ENCODE measurements at regions of chr1 and their contacts with region 1.

Region 1: GRCh38 chr1:162136760-162137159 is 67.3 kb downstream of the NOS1AP start:
- DNase-seq: peak in 1 of 2 experiments; percentile 39
- H3K4me3 ChIP-seq: no peak overlapping the region
- H3K4me3 Mint-ChIP-seq: peak overlapping the region; percentile 53
- H3K27ac Mint-ChIP-seq: peak overlapping the region; percentile 74
- H3K4me1 ChIP-seq: peaks cover 50% of the 10 kb centered on the region
- H3K4me1 Mint-ChIP-seq: peaks cover 46% of the 10 kb centered on the region
- H3K27me3 ChIP-seq: no peaks in the 10 kb centered on the region
- H3K27me3 Mint-ChIP-seq: no peaks in the 10 kb centered on the region
- CTCF ChIP-seq: no peak

Region 2: DNA sequence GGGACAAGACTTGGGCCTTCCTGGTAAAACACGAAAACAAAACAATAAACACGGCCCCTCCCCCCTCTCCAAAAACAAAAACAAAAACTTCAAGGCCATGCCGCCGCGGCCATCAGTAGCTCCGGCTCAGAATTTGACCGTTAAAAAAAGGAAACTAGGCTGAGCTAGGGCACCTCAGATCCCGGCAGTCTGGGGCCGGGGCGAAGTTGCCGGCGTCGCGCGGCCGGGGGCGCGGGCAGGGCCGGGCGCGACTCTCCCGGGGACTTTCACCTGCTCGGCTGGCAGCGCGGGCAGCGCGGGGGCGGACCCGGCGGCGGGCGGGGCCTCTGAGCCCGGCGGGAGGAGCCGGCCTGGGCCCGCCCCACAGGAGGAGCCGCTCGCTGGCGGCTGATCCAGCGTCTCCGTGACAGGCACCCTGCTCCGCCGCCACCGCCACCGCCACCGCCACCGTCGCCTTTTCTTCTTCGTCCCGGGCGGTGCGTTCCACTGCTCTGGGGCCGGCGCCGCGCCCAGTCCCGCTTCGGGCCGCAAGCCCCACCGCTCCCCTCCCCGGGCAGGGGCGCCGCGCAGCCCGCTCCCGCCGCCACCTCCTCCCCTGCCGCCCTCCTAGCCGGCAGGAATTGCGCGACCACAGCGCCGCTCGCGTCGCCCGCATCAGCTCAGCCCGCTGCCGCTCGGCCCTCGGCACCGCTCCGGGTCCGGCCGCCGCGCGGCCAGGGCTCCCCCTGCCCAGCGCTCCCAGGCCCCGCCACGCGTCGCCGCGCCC is 67.2 kb before region 1 on chr1 and contains the start of gene NOS1AP:
- CTCF ChIA-PET with region 1: no interaction called
- POLR2A ChIA-PET with region 1: no interaction called
- intact Hi-C with region 1: loop called (anchors 10 kb)
- DNase-seq: peak; percentile 79 to 89
- H3K4me3 ChIP-seq: peak within 1 kb of the TSS; percentile 74
- H3K4me3 Mint-ChIP-seq: peak within 1 kb of the TSS; percentile 77
- H3K27ac Mint-ChIP-seq: peak within 1 kb of the TSS; percentile 57
- H3K4me1 ChIP-seq: 0 out of 2 replicates have a peak, but pooled peaks cover 5% of the 10 kb centered on the region
- H3K4me1 Mint-ChIP-seq: peaks cover 11% of the 10 kb centered on the region
- H3K27me3 ChIP-seq: no peaks in the 10 kb centered on the region; the same call in 1 of the 2 replicates
- H3K27me3 Mint-ChIP-seq: no peaks in the 10 kb centered on the region
- CTCF ChIP-seq: no peak
- total RNA-seq, gene NOS1AP: 5.5 and 6.1 TPM in 2 replicates

Region 3: GRCh38 chr1:162193815-162194214 is 57.1 kb after region 1 on chr1:
- CTCF ChIA-PET with region 1: no interaction called
- POLR2A ChIA-PET with region 1: no interaction called
- intact Hi-C with region 1: loop called (anchors 1 kb)
- DNase-seq: no peak
- H3K4me3 ChIP-seq: no peak overlapping the region
- H3K4me3 Mint-ChIP-seq: no peak overlapping the region
- H3K27ac Mint-ChIP-seq: no peak overlapping the region
- H3K4me1 ChIP-seq: peaks cover 69% of the 10 kb centered on the region
- H3K4me1 Mint-ChIP-seq: peaks cover 26% of the 10 kb centered on the region
- H3K27me3 ChIP-seq: no peaks in the 10 kb centered on the region
- H3K27me3 Mint-ChIP-seq: no peaks in the 10 kb centered on the region
- CTCF ChIP-seq: no peak

Region 4: DNA sequence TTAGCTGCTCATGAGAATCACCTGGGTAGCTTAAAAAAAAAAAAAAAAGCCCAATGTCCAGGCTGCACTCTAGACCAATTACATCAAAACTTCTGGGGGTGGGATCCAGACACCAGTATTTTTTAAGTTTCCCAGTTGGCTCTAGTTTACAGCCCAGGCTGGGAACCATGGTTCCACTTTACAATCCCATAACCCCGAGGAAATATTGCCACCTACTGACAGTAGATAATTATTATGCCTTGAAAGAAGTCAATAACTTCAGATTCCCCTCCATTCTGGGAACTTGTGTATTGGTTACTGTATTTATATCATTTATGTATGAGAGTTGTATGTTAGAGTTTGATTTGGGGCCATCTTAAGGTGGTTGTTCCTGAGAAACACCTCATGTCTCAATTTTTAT is 139.7 kb after region 1 on chr1:
- CTCF ChIA-PET with region 1: no interaction called
- POLR2A ChIA-PET with region 1: no interaction called
- intact Hi-C with region 1: loop called (anchors 10 kb)
- DNase-seq: peak in 1 of 2 experiments; percentile 48
- H3K4me3 ChIP-seq: no peak overlapping the region
- H3K4me3 Mint-ChIP-seq: no peak overlapping the region
- H3K27ac Mint-ChIP-seq: no peak overlapping the region
- H3K4me1 ChIP-seq: no peaks in the 10 kb centered on the region
- H3K4me1 Mint-ChIP-seq: no peaks in the 10 kb centered on the region
- H3K27me3 ChIP-seq: no peaks in the 10 kb centered on the region
- H3K27me3 Mint-ChIP-seq: no peaks in the 10 kb centered on the region
- CTCF ChIP-seq: peak; percentile 50 to 51